ENCODE measurements at regions of chr1 and their contacts with region 1.

Region 1: GRCh38 chr1:23530747-23531561 is at the start of gene E2F2:
- DNase-seq: no peak
- ATAC-seq: peak; percentile 79
- H3K4me3 ChIP-seq: peak within 1 kb of the TSS; percentile 69 to 77
- H3K27ac ChIP-seq: peak within 1 kb of the TSS; percentile 76
- H3K4me1 ChIP-seq: peaks cover 30% of the 10 kb centered on the region
- H3K27me3 ChIP-seq: no peaks in the 10 kb centered on the region
- CTCF ChIP-seq: no peak; the same call in 1 of the 2 replicates
- total RNA-seq, gene E2F2: 9.5 TPM

Region 2: DNA sequence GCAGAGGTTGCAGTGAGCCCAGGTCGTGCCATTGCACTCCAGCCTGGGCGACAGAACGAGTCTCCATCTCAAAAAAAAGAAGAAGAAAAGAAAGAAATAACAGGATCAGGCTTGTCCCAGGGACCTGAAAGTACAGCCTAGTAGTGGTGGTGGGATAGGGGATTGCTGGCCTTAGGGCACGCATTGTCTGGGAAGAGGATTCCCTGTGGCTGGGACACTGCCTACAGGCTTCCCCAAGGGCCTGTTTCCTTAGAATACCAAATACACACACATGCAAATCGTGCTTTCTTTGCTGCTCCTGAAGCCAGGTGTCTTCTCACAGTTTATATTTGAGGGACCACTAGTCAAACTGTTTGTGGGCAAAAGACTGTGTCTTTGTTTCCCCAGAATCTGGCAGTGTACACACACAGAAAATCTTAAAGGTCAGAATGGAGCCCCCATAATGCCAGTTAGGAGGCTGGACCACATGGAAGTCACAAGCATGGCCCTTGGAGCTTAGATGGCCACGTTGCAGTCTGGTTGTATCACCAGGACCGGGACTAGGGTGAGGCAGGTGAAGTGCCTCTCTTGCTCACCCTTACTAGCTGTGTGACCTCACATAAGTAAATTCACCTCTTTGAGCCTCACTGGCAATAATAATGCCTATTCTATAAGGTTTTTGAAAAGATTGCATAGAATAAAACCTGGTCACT is 34.3 kb before region 1 on chr1:
- CTCF ChIA-PET with region 1: interaction called, 12 read pairs
- POLR2A ChIA-PET with region 1: no interaction called
- in situ Hi-C with region 1: no loop called
- intact Hi-C with region 1: no loop called
- DNase-seq: no peak
- ATAC-seq: peak; percentile 49
- H3K4me3 ChIP-seq: no peak overlapping the region
- H3K27ac ChIP-seq: no peak overlapping the region
- H3K4me1 ChIP-seq: no peaks in the 10 kb centered on the region
- H3K27me3 ChIP-seq: no peaks in the 10 kb centered on the region
- CTCF ChIP-seq: no peak

Measured in Panc1 (cell line).